Naive thymus-derived CD8-positive, alpha-beta T cell (primary cell): ENCODE measurements at regions of chr3 and their contacts with region 1.

Region 1: DNA sequence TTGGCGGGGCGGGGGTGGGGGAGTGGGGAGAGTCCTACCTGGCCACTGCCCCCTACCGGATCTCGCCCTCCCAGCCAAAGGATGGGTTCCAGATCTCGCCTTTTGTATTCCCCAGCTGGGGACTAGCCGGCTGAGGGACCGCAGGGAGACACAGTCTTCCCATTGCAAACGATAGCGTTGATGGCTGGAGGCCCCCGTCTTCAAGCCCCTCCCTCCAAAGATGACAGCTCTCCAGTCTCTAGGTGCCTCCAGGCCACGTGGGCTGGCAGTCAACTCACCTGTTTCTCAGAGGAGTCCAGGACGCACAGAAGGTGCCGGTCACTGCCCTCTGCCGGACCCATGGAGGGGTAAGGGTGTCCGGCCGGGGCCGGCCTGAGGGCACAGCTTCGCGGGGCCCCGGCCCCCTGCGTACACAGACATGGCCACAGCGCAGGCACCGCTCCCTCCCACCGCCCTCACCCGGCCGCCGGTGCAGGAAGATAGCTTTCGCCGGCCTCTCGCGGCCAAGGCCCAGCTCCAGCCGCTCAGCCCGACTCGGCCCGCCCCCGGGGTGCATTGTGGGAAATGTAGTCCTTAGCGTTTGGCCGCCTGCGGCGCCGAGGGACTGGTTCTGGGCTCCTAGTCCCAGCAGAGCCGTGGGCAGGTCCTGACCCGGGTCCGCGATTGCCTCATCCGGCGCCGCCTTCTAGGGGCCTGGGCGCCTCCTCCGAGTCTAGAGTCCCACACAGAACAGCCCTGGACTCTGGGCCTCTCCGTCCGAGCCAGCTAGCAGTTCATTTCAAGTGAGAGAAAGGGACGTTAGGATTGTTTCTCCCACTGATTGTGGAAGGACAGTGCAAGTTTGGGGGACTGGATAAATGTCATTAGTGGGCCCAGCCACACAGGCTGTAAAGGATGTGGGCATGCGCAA is at the start of gene MON1A:
- DNase-seq: peak; percentile 69 to 90 (median 76)
- ATAC-seq: peak; percentile 92 to 97
- H3K4me3 Mint-ChIP-seq: peak within 1 kb of the TSS; percentile 79 to 89 (median 84)
- H3K27ac Mint-ChIP-seq: peak within 1 kb of the TSS; percentile 43 to 93 (median 92)
- H3K4me1 Mint-ChIP-seq: peaks cover 13 to 35% (median 27%) of the 10 kb centered on the region in 4 donors
- H3K27me3 Mint-ChIP-seq: no peaks in the 10 kb centered on the region
- polyA plus RNA-seq, gene MON1A: 12.2 to 21.0 (median 13.7) TPM

Region 2: GRCh38 chr3:49484471-49484870 is 445.1 kb before region 1 on chr3:
- POLR2A ChIA-PET with region 1: no interaction called
- DNase-seq: no peak
- ATAC-seq: no peak
- H3K4me3 Mint-ChIP-seq: no peak overlapping the region
- H3K27ac Mint-ChIP-seq: no peak overlapping the region
- H3K4me1 Mint-ChIP-seq: peaks cover 2 to 25% (median 6%) of the 10 kb centered on the region in 4 donors
- H3K27me3 Mint-ChIP-seq: no peaks in the 10 kb centered on the region

Region 3: DNA sequence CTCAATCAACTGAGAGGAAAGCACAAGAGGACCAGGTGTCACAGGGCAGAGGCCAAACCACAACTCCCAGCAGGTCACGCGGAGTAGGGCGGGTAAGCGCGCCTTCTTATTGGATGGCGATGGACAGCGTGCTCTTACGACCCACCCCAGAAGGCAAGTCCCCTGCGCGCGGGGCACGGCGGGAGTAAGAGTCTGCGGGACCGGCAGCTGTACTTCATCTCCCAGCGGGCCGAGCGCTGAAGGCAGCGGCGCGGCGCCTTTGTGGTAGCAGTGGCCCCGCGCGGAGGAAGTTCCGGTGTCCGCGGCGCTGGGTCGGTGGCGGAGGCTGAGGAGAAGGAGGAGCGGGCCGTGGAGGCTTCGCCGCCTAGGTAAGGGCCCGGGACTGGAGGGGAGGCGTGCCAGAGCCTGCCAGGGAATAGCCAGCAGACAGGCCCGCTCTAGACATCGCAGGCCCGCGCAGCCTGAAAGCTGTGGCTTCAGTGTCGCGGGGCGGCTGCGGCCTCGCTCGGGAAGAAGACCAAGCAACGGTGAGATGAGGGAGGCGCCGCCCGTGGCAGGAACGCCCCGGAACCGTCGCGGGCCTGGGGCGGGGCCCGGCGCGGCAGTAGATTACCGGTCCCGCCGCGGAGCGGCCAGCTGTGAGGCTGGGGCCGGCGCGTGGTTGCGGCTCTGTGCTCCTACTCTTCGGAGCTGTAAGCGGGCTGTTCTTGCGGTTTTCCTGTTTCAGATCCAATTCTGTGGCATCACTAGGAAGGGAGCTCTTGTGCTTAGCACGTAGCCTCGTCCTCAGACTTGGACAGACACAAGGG is 10.5 kb after region 1 on chr3 and contains the start of gene RBM6:
- POLR2A ChIA-PET with region 1: interaction called, 29 read pairs
- DNase-seq: peak; percentile 85 to 96 (median 90)
- ATAC-seq: peak; percentile 96 to 98
- H3K4me3 Mint-ChIP-seq: peak within 1 kb of the TSS; percentile 95 to 100 (median 99)
- H3K27ac Mint-ChIP-seq: peak within 1 kb of the TSS; percentile 95 to 99 (median 98)
- H3K4me1 Mint-ChIP-seq: peaks cover 11 to 39% (median 31%) of the 10 kb centered on the region in 4 donors
- H3K27me3 Mint-ChIP-seq: no peaks in the 10 kb centered on the region
- polyA plus RNA-seq, gene RBM6: 29.9 to 46.5 (median 31.7) TPM

Region 4: GRCh38 chr3:49952924-49953323 is 23.3 kb after region 1 on chr3:
- POLR2A ChIA-PET with region 1: no interaction called
- DNase-seq: no peak
- ATAC-seq: no peak
- H3K4me3 Mint-ChIP-seq: no peak overlapping the region
- H3K27ac Mint-ChIP-seq: no peak overlapping the region
- H3K4me1 Mint-ChIP-seq: peaks cover 8 to 46% (median 29%) of the 10 kb centered on the region in 4 donors
- H3K27me3 Mint-ChIP-seq: no peaks in the 10 kb centered on the region